ENCODE measurements at regions of chr11 and their contacts with region 1.

Region 1: GRCh38 chr11:71420455-71421241 is 27.5 kb downstream of the DHCR7 start:
- DNase-seq: peak; percentile 92

Region 2: DNA sequence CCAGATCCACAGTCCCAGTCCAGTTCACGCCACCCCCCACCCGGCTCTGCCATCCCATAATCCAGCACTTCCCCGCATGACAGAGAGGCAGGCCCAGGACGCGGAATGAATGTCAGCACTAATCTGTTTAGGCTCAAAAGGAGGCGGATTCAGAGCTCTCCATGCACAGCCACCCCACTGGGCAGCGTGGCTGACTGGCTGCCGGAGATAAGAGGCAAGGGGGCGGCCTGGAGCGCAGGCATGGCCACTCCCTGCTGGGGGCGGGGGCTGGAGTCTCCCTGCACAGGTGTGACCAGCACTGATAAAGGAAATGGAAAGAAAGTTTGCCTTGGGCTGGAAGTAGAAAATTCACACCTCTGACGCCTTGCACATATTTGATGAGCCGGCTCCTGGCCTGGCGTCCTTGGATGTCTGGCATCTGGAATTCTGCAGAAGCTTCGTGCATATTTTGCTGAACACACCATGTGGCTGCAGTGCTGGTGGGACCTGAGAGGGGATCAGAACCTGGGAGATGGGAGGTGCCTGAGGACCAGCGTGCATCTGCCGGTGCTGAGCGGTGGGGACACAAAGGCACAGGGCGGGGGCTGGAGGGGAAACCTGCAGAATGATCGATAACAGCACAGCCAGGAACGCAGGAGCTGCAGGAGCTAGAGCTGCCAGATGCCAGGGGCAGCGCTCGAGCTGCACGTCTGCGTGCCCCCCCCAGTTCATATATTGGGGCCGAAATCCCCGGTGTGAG is 677.9 kb before region 1 on chr11:
- in situ Hi-C with region 1: loop called (anchors 25 kb)
- DNase-seq: no peak

Measured in SK-MEL-5 (cell line).